Right lobe of liver (tissue), 6 donors: ENCODE measurements at regions of chr19 and their contacts with region 1.

Region 1: GRCh38 chr19:34712395-34713261 is 21.4 kb upstream of the ZNF181 start:
- DNase-seq: peak in 1 of 3 donors; percentile 68
- ATAC-seq: peak; percentile 85 to 97 (median 90)
- H3K4me3 ChIP-seq: no peak overlapping the region
- H3K27ac ChIP-seq: no peak overlapping the region
- H3K4me1 ChIP-seq: no peaks in the 10 kb centered on the region
- H3K27me3 ChIP-seq: no peaks in the 10 kb centered on the region
- CTCF ChIP-seq: peak; percentile 77 to 94 (median 82)
- POLR2A ChIP-seq: no peak

Region 2: GRCh38 chr19:34501339-34502320 is 211.0 kb before region 1 on chr19:
- intact Hi-C with region 1: loop called (anchors 5 to 10 kb)
- DNase-seq: peak; percentile 93
- ATAC-seq: peak; percentile 94 to 99 (median 97)
- H3K4me3 ChIP-seq: no peak overlapping the region
- H3K27ac ChIP-seq: no peak overlapping the region
- H3K4me1 ChIP-seq: no peaks in the 10 kb centered on the region
- H3K27me3 ChIP-seq: no peaks in the 10 kb centered on the region
- CTCF ChIP-seq: peak; percentile 99 to 100 (median 99)
- POLR2A ChIP-seq: no peak

Region 3: DNA sequence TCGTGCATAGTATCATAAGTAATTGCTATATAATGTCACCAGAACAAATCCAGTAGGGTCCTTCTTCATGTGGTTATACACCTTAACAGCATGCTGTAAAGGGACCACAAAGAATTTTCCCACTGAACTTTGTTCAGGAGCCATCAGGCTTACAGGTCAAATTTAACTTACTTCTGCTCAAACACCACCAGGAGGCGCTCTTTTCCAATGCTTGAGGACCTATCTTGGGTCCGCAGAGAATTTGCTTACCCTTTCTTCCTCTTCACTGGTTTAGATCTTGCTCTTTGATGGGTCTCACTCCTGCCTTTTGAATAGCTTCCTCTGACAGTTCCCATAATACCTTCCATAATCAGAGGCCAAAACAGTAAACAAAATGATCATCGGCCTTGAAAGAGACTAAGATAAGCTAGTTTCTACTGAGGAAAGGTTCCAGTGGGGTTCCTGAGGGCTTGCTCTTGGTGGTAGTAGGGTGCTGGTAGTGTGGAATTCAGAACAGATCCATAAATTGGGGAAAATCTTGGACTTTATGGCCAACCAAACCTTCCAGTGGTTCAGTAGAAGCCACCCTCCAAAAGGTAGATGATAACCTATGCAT is 73.0 kb before region 1 on chr19:
- intact Hi-C with region 1: loop called (anchors 5 to 10 kb)
- DNase-seq: peak in 1 of 3 donors; percentile 63
- ATAC-seq: peak; percentile 87 to 95 (median 92)
- H3K4me3 ChIP-seq: no peak overlapping the region
- H3K27ac ChIP-seq: no peak overlapping the region
- H3K4me1 ChIP-seq: peaks cover 0 to 3% (median 0%) of the 10 kb centered on the region in 4 donors
- H3K27me3 ChIP-seq: no peaks in the 10 kb centered on the region
- CTCF ChIP-seq: peak; percentile 81 to 94 (median 87)
- POLR2A ChIP-seq: no peak